Naive thymus-derived CD4-positive, alpha-beta T cell (primary cell): ENCODE measurements at regions of chr5 and their contacts with region 1.

Region 1: GRCh38 chr5:56522960-56523359 is 289.8 kb upstream of the ANKRD55 start:
- DNase-seq: no peak
- ATAC-seq: no peak
- H3K4me3 ChIP-seq: no peak overlapping the region
- H3K4me3 Mint-ChIP-seq: no peak overlapping the region
- H3K27ac ChIP-seq: no peak overlapping the region
- H3K27ac Mint-ChIP-seq: no peak overlapping the region
- H3K4me1 ChIP-seq: no peaks in the 10 kb centered on the region
- H3K4me1 Mint-ChIP-seq: peaks cover 3 to 12% (median 6%) of the 10 kb centered on the region in 7 donors
- H3K27me3 ChIP-seq: no peaks in the 10 kb centered on the region
- H3K27me3 Mint-ChIP-seq: peaks cover 0 to under 1% (median 0%) of the 10 kb centered on the region in 5 donors

Region 2: GRCh38 chr5:56279979-56280378 is 243.0 kb before region 1 on chr5:
- CTCF ChIA-PET with region 1: no interaction called
- POLR2A ChIA-PET with region 1: no interaction called
- intact Hi-C with region 1: no loop called
- DNase-seq: no peak
- ATAC-seq: no peak
- H3K4me3 ChIP-seq: no peak overlapping the region
- H3K4me3 Mint-ChIP-seq: no peak overlapping the region
- H3K27ac ChIP-seq: no peak overlapping the region
- H3K27ac Mint-ChIP-seq: no peak overlapping the region
- H3K4me1 ChIP-seq: no peaks in the 10 kb centered on the region
- H3K4me1 Mint-ChIP-seq: peaks cover 0 to 5% (median 0%) of the 10 kb centered on the region in 7 donors
- H3K27me3 ChIP-seq: no peaks in the 10 kb centered on the region
- H3K27me3 Mint-ChIP-seq: no peaks in the 10 kb centered on the region

Region 3: GRCh38 chr5:56506211-56506965 is 16.6 kb before region 1 on chr5:
- CTCF ChIA-PET with region 1: no interaction called
- POLR2A ChIA-PET with region 1: interaction called, 3 read pairs
- intact Hi-C with region 1: loop called in 1 of 2 experiments (anchors 2 kb)
- DNase-seq: no peak
- ATAC-seq: no peak
- H3K4me3 ChIP-seq: no peak overlapping the region
- H3K4me3 Mint-ChIP-seq: no peak overlapping the region
- H3K27ac ChIP-seq: no peak overlapping the region
- H3K27ac Mint-ChIP-seq: peak overlapping the region in 1 of 9 donors; percentile 32
- H3K4me1 ChIP-seq: peaks cover 0 to 10% of the 10 kb centered on the region in 2 donors
- H3K4me1 Mint-ChIP-seq: peaks cover 0 to 17% (median 10%) of the 10 kb centered on the region in 7 donors
- H3K27me3 ChIP-seq: no peaks in the 10 kb centered on the region
- H3K27me3 Mint-ChIP-seq: no peaks in the 10 kb centered on the region